ENCODE measurements at regions of chr1 and their contacts with region 1.

Region 1: GRCh38 chr1:171801487-171801891 is 20.0 kb downstream of the METTL13 start:
- DNase-seq: peak; percentile 73
- H3K4me3 Mint-ChIP-seq: no peak overlapping the region
- H3K27ac Mint-ChIP-seq: no peak overlapping the region
- H3K4me1 Mint-ChIP-seq: no peaks in the 10 kb centered on the region
- H3K27me3 Mint-ChIP-seq: no peaks in the 10 kb centered on the region
- CTCF ChIP-seq: peak; percentile 88

Region 2: GRCh38 chr1:171661076-171661650 is 140.3 kb before region 1 on chr1:
- CTCF ChIA-PET with region 1: no interaction called
- POLR2A ChIA-PET with region 1: no interaction called
- intact Hi-C with region 1: no loop called
- DNase-seq: no peak
- H3K4me3 Mint-ChIP-seq: no peak overlapping the region
- H3K27ac Mint-ChIP-seq: no peak overlapping the region
- H3K4me1 Mint-ChIP-seq: no peaks in the 10 kb centered on the region
- H3K27me3 Mint-ChIP-seq: no peaks in the 10 kb centered on the region
- CTCF ChIP-seq: no peak

Region 3: GRCh38 chr1:171741872-171742576 is 59.5 kb before region 1 on chr1 and contains the start of gene VAMP4:
- CTCF ChIA-PET with region 1: interaction called, 6 read pairs
- POLR2A ChIA-PET with region 1: interaction called, 21 read pairs
- intact Hi-C with region 1: no loop called
- DNase-seq: peak; percentile 89
- H3K4me3 Mint-ChIP-seq: peak within 1 kb of the TSS; percentile 87
- H3K27ac Mint-ChIP-seq: peak within 1 kb of the TSS; percentile 98
- H3K4me1 Mint-ChIP-seq: peaks cover 45% of the 10 kb centered on the region
- H3K27me3 Mint-ChIP-seq: no peaks in the 10 kb centered on the region
- CTCF ChIP-seq: no peak
- total RNA-seq, gene VAMP4: 20.2 and 21.1 TPM in 2 replicates

Region 4: DNA sequence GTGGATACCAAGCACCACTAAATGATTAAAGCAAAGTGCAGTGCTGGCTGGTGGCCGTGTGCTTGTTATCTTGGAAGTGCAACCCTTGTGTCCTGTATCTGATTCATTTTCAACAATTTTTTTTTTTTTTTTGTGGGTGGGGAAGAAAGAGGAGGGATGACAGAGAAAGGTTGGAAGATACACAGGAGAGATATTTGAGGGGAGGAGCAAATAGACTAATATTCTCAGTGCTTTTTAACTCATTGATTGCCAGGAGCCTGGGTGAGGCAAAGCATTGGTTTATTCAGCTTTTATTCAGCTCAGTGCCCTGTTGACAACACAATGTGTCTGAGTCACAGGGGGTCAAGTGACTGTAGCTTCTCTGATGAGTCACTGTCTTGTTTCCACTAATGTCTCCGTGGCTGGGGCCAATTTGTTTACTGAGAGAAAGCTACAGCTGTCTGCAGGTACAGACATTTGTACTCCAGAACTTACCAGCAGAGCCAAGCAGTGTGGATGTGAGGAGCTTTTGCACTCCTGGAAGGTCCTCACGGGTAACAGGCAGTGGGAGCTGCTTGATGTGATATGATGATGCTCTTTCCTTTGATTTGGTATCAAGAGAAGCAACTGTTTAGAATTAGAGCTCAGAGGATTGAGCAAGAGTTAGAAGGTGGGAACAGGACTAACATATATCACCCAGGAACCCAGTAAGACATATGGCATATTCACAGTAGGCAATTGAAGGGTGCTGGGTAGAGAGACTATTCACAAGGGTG is 16.2 kb after region 1 on chr1:
- CTCF ChIA-PET with region 1: interaction called, 155 read pairs
- POLR2A ChIA-PET with region 1: interaction called, 3 read pairs
- intact Hi-C with region 1: no loop called
- DNase-seq: peak; percentile 94
- H3K4me3 Mint-ChIP-seq: peak overlapping the region; percentile 3
- H3K27ac Mint-ChIP-seq: peak overlapping the region; percentile 90
- H3K4me1 Mint-ChIP-seq: peaks cover 23% of the 10 kb centered on the region
- H3K27me3 Mint-ChIP-seq: no peaks in the 10 kb centered on the region
- CTCF ChIP-seq: no peak

Region 5: GRCh38 chr1:171904778-171905449 is 103.4 kb after region 1 on chr1:
- CTCF ChIA-PET with region 1: interaction called, 12 read pairs
- POLR2A ChIA-PET with region 1: interaction called, 3 read pairs
- intact Hi-C with region 1: no loop called
- DNase-seq: peak; percentile 29
- H3K4me3 Mint-ChIP-seq: no peak overlapping the region
- H3K27ac Mint-ChIP-seq: peak overlapping the region; percentile 13
- H3K4me1 Mint-ChIP-seq: peaks cover 13% of the 10 kb centered on the region
- H3K27me3 Mint-ChIP-seq: no peaks in the 10 kb centered on the region
- CTCF ChIP-seq: no peak

Region 6: GRCh38 chr1:171943973-171944561 is 142.6 kb after region 1 on chr1:
- CTCF ChIA-PET with region 1: interaction called, 10 read pairs
- POLR2A ChIA-PET with region 1: no interaction called
- intact Hi-C with region 1: no loop called
- DNase-seq: no peak
- H3K4me3 Mint-ChIP-seq: no peak overlapping the region
- H3K27ac Mint-ChIP-seq: no peak overlapping the region
- H3K4me1 Mint-ChIP-seq: no peaks in the 10 kb centered on the region
- H3K27me3 Mint-ChIP-seq: no peaks in the 10 kb centered on the region
- CTCF ChIP-seq: no peak

Region 7: GRCh38 chr1:172002725-172003345 is 201.3 kb after region 1 on chr1:
- CTCF ChIA-PET with region 1: interaction called, 115 read pairs
- POLR2A ChIA-PET with region 1: no interaction called
- intact Hi-C with region 1: no loop called
- DNase-seq: peak; percentile 70
- H3K4me3 Mint-ChIP-seq: no peak overlapping the region
- H3K27ac Mint-ChIP-seq: no peak overlapping the region
- H3K4me1 Mint-ChIP-seq: peaks cover 18% of the 10 kb centered on the region
- H3K27me3 Mint-ChIP-seq: no peaks in the 10 kb centered on the region
- CTCF ChIP-seq: peak; percentile 95

Measured in MCF 10A (cell line).